WTC11 (cell line): ENCODE measurements at regions of chr1 and their contacts with region 1.

Region 1: DNA sequence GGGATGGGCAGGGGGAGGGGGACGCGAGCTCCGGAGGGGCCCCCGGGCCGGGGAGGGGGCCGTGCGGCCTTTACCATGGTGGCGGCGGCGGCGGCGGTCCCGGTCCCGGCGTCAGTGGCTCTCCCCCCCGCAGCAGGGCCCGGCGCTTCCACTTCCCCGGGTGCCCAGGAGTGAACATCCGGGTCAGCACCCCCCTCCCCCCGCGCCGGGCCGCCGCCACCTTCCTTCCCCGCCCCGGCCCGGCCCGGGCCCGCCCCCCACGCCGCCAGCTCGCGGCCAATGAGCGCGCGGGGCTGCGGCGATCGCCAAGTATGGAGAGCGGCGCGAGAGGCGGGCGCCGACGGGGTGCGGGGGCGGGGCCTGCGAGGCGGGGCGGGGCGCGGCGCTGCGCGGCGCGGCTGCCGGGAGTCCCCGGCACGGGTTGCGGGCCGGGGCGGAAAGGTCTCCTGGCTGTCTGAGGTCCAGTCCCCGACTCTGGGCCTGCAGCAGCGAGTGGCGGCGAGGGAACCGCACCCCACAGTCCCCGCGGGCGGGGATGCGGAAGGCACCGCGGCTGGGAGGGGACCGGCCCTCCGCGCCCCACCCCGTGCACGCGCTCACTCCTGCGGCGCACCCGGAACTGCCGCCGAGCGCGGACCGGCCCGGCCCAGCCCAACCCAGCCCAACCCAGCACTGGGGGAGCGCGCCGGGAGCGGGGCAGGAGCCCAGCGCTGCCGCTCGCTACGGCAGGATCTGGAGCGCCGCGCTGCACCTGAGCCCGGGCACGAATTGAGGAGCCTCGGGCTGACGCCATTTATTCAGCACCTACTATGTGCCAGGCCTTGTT is at the start of gene CAPZB:
- DNase-seq: peak; percentile 88
- ATAC-seq: peak; percentile 81
- H3K4me3 Mint-ChIP-seq: peak within 1 kb of the TSS; percentile 94
- H3K27ac Mint-ChIP-seq: peak within 1 kb of the TSS; percentile 99
- H3K4me1 Mint-ChIP-seq: peaks cover 55% of the 10 kb centered on the region
- H3K27me3 Mint-ChIP-seq: no peaks in the 10 kb centered on the region; the same call in 1 of the 2 replicates
- CTCF ChIP-seq: no peak
- total RNA-seq, gene CAPZB: 348 to 380 TPM (median 363 TPM) in 3 replicates

Region 2: DNA sequence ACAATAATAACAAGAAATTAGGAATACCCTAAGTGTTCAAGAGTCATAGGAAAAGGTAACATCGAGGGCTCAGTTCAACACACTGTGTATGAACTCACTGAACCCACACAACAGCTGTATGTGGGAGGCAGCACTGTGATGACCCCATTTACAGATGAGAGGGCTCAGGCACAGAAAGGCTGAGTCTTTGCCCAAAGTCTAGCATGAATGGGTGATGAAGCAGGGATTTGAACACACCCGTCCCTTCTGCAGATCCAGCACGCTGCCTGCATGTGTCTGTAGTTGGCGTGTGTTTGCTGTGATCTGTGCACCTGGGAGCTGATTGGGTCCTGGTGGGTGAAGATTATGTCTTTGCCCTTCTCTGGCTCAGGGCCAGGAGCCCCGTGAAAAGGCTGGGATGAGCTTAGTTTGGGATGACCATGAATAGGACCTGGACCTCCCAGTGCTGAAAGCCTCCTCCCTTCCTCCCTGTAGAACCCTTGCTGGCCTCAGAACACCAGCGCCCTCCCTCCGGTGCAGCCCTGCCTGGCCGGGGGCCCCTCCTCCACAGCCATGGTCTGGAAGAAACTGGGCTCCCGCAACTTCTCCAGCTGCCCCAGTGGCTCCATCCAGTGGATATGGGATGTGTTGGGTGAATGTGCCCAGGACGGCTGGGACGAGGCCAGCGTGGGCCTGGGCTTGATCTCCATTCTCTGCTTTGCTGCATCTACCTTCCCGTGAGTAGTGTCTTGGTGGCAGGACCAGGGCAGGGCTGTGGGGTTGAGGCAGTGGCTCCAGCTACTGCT is 168.3 kb before region 1 on chr1:
- CTCF ChIA-PET with region 1: no interaction called
- POLR2A ChIA-PET with region 1: no interaction called
- DNase-seq: peak; percentile 67
- ATAC-seq: peak; percentile 91
- H3K4me3 Mint-ChIP-seq: no peak overlapping the region
- H3K27ac Mint-ChIP-seq: no peak overlapping the region
- H3K4me1 Mint-ChIP-seq: peaks cover 9% of the 10 kb centered on the region
- H3K27me3 Mint-ChIP-seq: no peaks in the 10 kb centered on the region
- CTCF ChIP-seq: no peak

Region 3: GRCh38 chr1:19439464-19440171 is 46.0 kb before region 1 on chr1:
- CTCF ChIA-PET with region 1: interaction called, 10 read pairs
- POLR2A ChIA-PET with region 1: no interaction called
- DNase-seq: peak; percentile 54
- ATAC-seq: peak; percentile 74
- H3K4me3 Mint-ChIP-seq: no peak overlapping the region
- H3K27ac Mint-ChIP-seq: peak overlapping the region; percentile 70
- H3K4me1 Mint-ChIP-seq: peaks cover 39% of the 10 kb centered on the region
- H3K27me3 Mint-ChIP-seq: no peaks in the 10 kb centered on the region
- CTCF ChIP-seq: no peak

Region 4: DNA sequence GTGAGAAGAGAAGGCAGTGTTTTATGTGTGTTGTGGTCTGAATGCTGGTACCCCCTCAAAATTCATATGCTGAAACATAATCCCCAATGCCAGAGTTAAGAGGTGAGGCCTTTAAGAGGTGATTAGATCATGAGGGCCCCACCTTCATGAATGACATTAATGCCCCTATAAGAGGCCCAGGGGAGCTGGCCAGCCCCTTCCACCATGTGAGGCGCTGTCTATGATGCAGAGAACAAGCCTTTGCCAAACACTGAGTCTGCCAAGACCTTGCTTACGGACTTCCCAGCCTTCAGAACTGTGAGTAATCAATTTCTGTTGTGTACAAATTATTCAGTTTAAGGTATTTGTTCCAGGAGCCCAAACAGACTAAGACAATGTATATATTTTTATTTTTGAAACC is 20.5 kb before region 1 on chr1:
- CTCF ChIA-PET with region 1: interaction called, 12 read pairs
- POLR2A ChIA-PET with region 1: interaction called, 4 read pairs
- DNase-seq: no peak
- ATAC-seq: no peak
- H3K4me3 Mint-ChIP-seq: no peak overlapping the region
- H3K27ac Mint-ChIP-seq: no peak overlapping the region
- H3K4me1 Mint-ChIP-seq: peaks cover 80% of the 10 kb centered on the region
- H3K27me3 Mint-ChIP-seq: no peaks in the 10 kb centered on the region
- CTCF ChIP-seq: no peak

Region 5: DNA sequence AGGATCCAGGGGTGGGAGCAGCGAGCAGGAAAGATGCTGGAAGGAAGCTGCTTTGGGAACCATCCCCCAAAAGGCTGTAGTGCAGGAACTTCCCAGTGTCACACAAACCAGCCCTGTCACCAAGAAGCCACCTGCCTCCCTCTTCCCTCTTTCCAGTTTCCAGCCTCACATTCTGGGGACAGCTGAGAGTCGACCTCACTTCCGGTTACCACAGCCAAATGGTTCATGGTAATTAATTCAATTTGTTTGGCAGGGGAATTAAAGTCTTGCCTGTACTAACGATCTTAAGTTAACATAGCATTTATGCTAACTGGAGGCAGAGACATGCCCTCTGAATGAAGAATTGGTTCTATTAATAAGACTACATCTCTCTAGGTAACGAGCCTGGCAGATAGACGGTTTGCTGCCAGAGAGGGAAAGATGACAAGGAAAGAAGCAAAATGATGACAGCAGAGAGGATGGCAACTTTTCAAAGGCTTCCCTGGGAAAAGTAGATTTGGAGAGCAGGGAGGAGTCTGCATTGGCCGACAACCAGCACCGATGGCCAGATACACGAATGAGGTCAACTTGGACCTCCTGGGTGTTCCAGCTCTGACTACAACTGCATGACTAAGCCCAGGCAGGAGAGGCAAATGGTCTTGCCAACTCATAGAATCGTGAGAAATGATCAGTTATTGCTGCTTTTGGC is 250.0 kb after region 1 on chr1:
- CTCF ChIA-PET with region 1: no interaction called
- POLR2A ChIA-PET with region 1: no interaction called
- DNase-seq: no peak
- ATAC-seq: no peak
- H3K4me3 Mint-ChIP-seq: no peak overlapping the region
- H3K27ac Mint-ChIP-seq: no peak overlapping the region
- H3K4me1 Mint-ChIP-seq: no peaks in the 10 kb centered on the region
- H3K27me3 Mint-ChIP-seq: no peaks in the 10 kb centered on the region
- CTCF ChIP-seq: no peak